ENCODE measurements at regions of chr3 and their contacts with region 1.

Region 1: DNA sequence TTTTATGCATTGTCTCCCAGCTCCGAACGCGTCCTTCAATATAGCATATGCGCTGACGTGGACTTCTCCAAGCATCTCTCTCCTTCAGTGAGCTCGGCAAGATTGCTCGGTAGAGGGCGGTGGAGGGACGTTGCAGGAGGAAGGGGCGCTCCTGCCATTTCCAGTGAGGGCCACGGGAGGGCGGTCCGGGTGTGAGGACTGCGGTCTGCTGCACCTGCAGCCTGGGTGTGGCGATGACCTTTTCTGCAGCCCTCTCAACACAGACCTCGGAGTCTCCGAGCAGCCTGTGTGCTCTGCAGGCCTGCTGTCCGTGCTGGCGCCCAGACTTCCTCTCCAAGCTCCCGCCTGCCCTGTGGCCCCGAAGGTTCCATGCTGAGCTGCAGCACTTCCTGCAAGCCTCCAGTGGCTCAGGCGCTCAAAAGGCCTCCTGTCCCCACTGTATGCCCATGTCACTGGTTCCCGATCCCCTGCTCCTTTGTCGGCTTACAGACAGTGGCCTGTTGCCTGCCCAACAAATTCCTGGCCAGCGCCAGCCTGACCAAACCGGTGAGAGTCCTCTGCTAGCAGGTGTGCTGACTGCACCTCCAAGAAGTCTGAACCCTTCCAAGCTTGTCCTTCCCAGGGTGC is 8.9 kb upstream of the RTP3 start:
- DNase-seq: peak; percentile 88 to 96 (median 93)
- ATAC-seq: peak; percentile 97
- H3K4me3 ChIP-seq: peak overlapping the region; percentile 19 to 39
- H3K4me3 Mint-ChIP-seq: peak overlapping the region; percentile 69
- H3K27ac ChIP-seq: no peak overlapping the region
- H3K27ac Mint-ChIP-seq: peak overlapping the region; percentile 81
- H3K4me1 ChIP-seq: peaks cover 8% of the 10 kb centered on the region
- H3K4me1 Mint-ChIP-seq: peaks cover 18% of the 10 kb centered on the region
- H3K27me3 ChIP-seq: no peaks in the 10 kb centered on the region
- H3K27me3 Mint-ChIP-seq: no peaks in the 10 kb centered on the region
- CTCF ChIP-seq: peak; percentile 100

Region 2: DNA sequence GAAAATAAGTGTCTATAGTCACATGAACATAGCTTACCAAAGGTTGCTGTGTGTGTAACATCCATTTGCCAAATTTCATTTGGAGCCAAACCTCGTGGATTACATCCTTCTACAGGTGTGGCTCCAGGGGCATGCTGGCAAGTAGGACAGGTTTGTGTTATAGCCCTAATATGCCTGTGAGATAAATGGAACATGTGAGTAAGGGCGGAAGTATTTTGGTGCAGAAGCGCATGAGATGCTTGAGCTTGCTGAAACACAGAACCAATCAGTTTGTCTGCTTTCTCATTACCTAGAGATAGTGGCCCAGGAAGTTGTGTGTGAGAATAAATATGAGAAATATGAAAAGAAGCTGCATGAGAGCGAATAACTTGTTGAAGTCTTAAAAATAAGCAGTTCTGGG is 439.7 kb before region 1 on chr3:
- CTCF ChIA-PET with region 1: no interaction called
- POLR2A ChIA-PET with region 1: no interaction called
- intact Hi-C with region 1: no loop called
- DNase-seq: no peak
- ATAC-seq: no peak
- H3K4me3 ChIP-seq: no peak overlapping the region
- H3K4me3 Mint-ChIP-seq: no peak overlapping the region
- H3K27ac ChIP-seq: no peak overlapping the region
- H3K27ac Mint-ChIP-seq: no peak overlapping the region
- H3K4me1 ChIP-seq: peaks cover 22% of the 10 kb centered on the region
- H3K4me1 Mint-ChIP-seq: peaks cover 37% of the 10 kb centered on the region
- H3K27me3 ChIP-seq: no peaks in the 10 kb centered on the region
- H3K27me3 Mint-ChIP-seq: no peaks in the 10 kb centered on the region
- CTCF ChIP-seq: no peak

Region 3: DNA sequence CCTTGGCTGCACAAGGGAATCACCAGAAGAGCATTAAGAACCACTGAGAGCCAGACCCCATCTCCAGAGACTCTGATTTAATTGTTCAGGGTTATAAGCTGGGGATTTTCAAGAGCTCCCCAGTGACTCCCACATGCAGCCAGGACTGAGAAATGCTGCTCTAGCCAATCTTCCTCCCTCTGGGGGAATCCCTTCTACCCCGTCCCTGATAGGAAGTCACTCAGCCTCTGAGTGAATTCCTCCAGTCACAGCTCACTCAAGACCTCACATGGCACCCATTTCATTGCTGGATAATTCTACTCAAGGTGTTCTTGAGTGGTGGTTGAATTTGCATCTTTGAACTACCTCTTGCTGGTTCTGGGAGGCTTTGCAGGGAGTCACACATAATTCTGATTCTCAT is 235.9 kb before region 1 on chr3:
- CTCF ChIA-PET with region 1: no interaction called
- POLR2A ChIA-PET with region 1: no interaction called
- intact Hi-C with region 1: no loop called
- DNase-seq: no peak
- ATAC-seq: no peak
- H3K4me3 ChIP-seq: no peak overlapping the region
- H3K4me3 Mint-ChIP-seq: no peak overlapping the region
- H3K27ac ChIP-seq: no peak overlapping the region
- H3K27ac Mint-ChIP-seq: no peak overlapping the region
- H3K4me1 ChIP-seq: no peaks in the 10 kb centered on the region
- H3K4me1 Mint-ChIP-seq: no peaks in the 10 kb centered on the region
- H3K27me3 ChIP-seq: no peaks in the 10 kb centered on the region
- H3K27me3 Mint-ChIP-seq: peaks cover 5% of the 10 kb centered on the region
- CTCF ChIP-seq: no peak

Region 4: DNA sequence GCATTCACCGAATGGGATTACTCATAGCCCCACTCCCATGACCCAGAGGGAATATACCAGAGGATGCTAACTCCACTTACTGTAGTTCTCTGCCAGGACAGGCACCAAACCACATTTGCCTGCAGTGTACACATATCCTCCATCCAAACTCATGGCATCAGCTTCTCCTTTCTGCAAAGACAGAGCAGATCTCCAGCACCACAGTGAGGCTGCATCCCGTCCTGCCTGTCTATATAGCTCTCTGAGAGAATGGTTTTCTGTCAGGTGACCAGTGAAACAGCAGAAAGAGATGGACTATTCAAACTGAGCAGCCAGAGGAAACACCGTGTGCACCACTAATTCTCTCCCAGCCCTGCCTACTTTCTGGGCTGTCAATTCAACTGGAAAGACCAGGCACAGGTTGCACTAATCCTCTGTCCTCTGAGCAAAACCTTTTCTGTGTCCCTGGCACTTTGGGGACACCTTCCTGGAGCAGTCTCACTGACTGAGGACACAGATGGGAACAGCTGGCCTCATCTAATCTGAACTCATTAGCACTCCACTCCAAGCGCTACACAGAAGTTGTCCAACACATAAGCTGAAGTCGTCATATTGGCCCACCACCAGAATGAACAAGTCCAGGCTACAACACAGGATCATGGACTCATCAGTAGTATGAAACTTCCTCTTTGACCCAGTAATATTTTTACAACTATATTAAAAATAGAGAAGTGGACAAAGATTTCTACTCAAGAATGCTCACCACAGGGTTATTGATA is 41.4 kb before region 1 on chr3:
- CTCF ChIA-PET with region 1: no interaction called
- POLR2A ChIA-PET with region 1: no interaction called
- intact Hi-C with region 1: no loop called
- DNase-seq: no peak
- ATAC-seq: no peak
- H3K4me3 ChIP-seq: no peak overlapping the region
- H3K4me3 Mint-ChIP-seq: no peak overlapping the region
- H3K27ac ChIP-seq: no peak overlapping the region
- H3K27ac Mint-ChIP-seq: no peak overlapping the region
- H3K4me1 ChIP-seq: no peaks in the 10 kb centered on the region
- H3K4me1 Mint-ChIP-seq: no peaks in the 10 kb centered on the region
- H3K27me3 ChIP-seq: no peaks in the 10 kb centered on the region
- H3K27me3 Mint-ChIP-seq: peaks cover 11% of the 10 kb centered on the region
- CTCF ChIP-seq: no peak

Region 5: GRCh38 chr3:46469680-46470357 is 19.0 kb before region 1 on chr3:
- CTCF ChIA-PET with region 1: interaction called, 29 read pairs
- POLR2A ChIA-PET with region 1: interaction called, 3 read pairs
- intact Hi-C with region 1: no loop called
- DNase-seq: no peak
- ATAC-seq: no peak
- H3K4me3 ChIP-seq: no peak overlapping the region
- H3K4me3 Mint-ChIP-seq: no peak overlapping the region
- H3K27ac ChIP-seq: no peak overlapping the region
- H3K27ac Mint-ChIP-seq: no peak overlapping the region
- H3K4me1 ChIP-seq: no peaks in the 10 kb centered on the region
- H3K4me1 Mint-ChIP-seq: no peaks in the 10 kb centered on the region
- H3K27me3 ChIP-seq: peaks cover 4 to 5% of the 10 kb centered on the region in 2 experiments
- H3K27me3 Mint-ChIP-seq: peaks cover 13% of the 10 kb centered on the region
- CTCF ChIP-seq: no peak

Region 6: GRCh38 chr3:46549408-46549904 is 60.6 kb after region 1 on chr3:
- CTCF ChIA-PET with region 1: interaction called, 23 read pairs
- POLR2A ChIA-PET with region 1: interaction called, 5 read pairs
- intact Hi-C with region 1: no loop called
- DNase-seq: no peak
- ATAC-seq: no peak
- H3K4me3 ChIP-seq: no peak overlapping the region
- H3K4me3 Mint-ChIP-seq: no peak overlapping the region
- H3K27ac ChIP-seq: no peak overlapping the region
- H3K27ac Mint-ChIP-seq: no peak overlapping the region
- H3K4me1 ChIP-seq: peaks cover 5% of the 10 kb centered on the region
- H3K4me1 Mint-ChIP-seq: peaks cover 16% of the 10 kb centered on the region
- H3K27me3 ChIP-seq: peaks cover 0 to 2% of the 10 kb centered on the region in 2 experiments
- H3K27me3 Mint-ChIP-seq: no peaks in the 10 kb centered on the region
- CTCF ChIP-seq: no peak

Region 7: GRCh38 chr3:46574881-46575576 is 86.2 kb after region 1 on chr3:
- CTCF ChIA-PET with region 1: interaction called, 10 read pairs
- POLR2A ChIA-PET with region 1: no interaction called
- intact Hi-C with region 1: no loop called
- DNase-seq: no peak
- ATAC-seq: no peak
- H3K4me3 ChIP-seq: no peak overlapping the region
- H3K4me3 Mint-ChIP-seq: no peak overlapping the region
- H3K27ac ChIP-seq: no peak overlapping the region
- H3K27ac Mint-ChIP-seq: no peak overlapping the region
- H3K4me1 ChIP-seq: peaks cover 6% of the 10 kb centered on the region
- H3K4me1 Mint-ChIP-seq: peaks cover 7% of the 10 kb centered on the region
- H3K27me3 ChIP-seq: no peaks in the 10 kb centered on the region
- H3K27me3 Mint-ChIP-seq: peaks cover 10% of the 10 kb centered on the region
- CTCF ChIP-seq: no peak

Region 8: DNA sequence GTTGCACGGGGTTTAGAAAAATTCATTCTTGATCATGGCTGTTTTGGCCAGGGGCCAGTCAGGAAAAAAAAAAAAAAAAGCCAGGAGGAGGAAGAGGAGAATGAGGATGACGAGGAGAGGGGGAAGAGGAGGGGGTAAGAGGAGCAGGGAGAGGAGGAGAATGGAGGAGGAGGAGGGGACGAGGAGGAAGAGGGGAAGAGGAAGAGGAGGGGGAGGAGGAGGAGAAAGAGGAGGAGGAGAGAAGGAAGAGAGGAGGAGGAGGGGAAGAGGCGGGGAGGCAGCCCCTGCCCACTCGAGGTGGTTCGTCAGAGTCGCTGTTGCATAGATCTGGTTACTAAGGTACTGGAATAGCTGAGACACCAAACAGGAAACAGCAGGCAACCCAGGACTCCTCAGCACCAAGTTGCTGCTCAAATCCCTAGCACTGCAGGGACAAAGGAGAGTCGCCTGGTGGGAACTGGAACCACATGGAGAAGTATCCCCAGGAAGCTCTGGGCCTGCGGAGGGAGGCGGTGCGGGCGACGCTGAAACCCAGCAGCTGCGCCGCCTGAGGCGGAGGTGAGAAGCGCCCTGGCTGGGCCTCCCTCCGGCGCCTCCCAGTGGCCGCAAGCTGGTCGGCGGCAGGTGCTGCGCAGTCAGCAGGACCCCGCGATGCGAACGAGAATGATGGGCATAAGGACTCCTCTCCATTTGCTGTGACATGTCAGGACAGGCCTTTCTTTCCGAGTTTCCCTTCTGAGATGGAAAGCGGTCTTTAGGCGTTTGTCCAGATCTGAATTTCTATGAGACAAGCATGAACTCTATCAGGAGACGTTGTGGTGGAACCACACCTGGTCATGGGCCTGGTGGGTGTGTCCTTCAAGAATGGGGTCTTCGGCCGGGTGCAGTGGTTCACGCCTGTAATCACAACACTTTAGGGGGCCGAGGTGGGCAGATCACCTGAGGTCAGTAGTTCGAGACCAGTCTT is 141.0 kb after region 1 on chr3:
- CTCF ChIA-PET with region 1: interaction called, 138 read pairs
- POLR2A ChIA-PET with region 1: interaction called, 12 read pairs
- intact Hi-C with region 1: loop called (anchors 1 kb)
- DNase-seq: peak; percentile 63 to 87 (median 77)
- ATAC-seq: peak; percentile 99
- H3K4me3 ChIP-seq: peak overlapping the region; percentile 40 to 62
- H3K4me3 Mint-ChIP-seq: peak overlapping the region; percentile 58
- H3K27ac ChIP-seq: peak overlapping the region in 1 of 2 experiments; percentile 35
- H3K27ac Mint-ChIP-seq: peak overlapping the region; percentile 82
- H3K4me1 ChIP-seq: peaks cover 12% of the 10 kb centered on the region
- H3K4me1 Mint-ChIP-seq: peaks cover 19% of the 10 kb centered on the region
- H3K27me3 ChIP-seq: no peaks in the 10 kb centered on the region
- H3K27me3 Mint-ChIP-seq: peaks cover 4% of the 10 kb centered on the region
- CTCF ChIP-seq: peak; percentile 99